Endothelial cell of umbilical vein (primary cell): ENCODE measurements at regions of chr6 and their contacts with region 1.

Region 1: GRCh38 chr6:117840541-117840983 is 66.5 kb upstream of the SLC35F1 start:
- DNase-seq: peak; percentile 41
- H3K4me3 ChIP-seq: no peak overlapping the region
- H3K27ac ChIP-seq: no peak overlapping the region
- H3K4me1 ChIP-seq: no peaks in the 10 kb centered on the region
- H3K27me3 ChIP-seq: no peaks in the 10 kb centered on the region
- CTCF ChIP-seq: peak; percentile 9 to 11
- POLR2A ChIP-seq: no peak

Region 2: DNA sequence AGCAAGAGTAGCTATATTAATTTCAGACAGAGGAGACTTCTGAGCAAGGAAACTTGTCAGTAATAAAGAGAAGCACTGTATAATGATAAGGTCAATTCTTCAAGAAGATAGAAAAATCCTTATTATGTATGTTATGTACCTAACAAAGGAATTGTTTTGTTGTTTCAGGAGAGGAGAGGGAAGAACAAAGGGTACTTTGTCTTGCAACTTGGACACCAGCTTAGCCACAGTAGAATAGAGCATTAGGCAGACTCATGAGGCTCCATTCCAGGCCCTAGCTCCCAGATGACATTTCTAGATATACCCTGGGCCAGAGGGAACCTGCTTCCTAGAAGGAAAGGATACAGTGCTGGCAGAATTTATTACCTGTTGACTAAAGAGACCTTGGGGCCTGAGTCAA is 171.8 kb before region 1 on chr6:
- CTCF ChIA-PET with region 1: no interaction called
- POLR2A ChIA-PET with region 1: no interaction called
- dilution Hi-C with region 1: no loop called
- intact Hi-C with region 1: no loop called
- DNase-seq: no peak
- H3K4me3 ChIP-seq: no peak overlapping the region
- H3K27ac ChIP-seq: no peak overlapping the region
- H3K4me1 ChIP-seq: no peaks in the 10 kb centered on the region
- H3K27me3 ChIP-seq: no peaks in the 10 kb centered on the region
- CTCF ChIP-seq: no peak
- POLR2A ChIP-seq: no peak

Region 3: DNA sequence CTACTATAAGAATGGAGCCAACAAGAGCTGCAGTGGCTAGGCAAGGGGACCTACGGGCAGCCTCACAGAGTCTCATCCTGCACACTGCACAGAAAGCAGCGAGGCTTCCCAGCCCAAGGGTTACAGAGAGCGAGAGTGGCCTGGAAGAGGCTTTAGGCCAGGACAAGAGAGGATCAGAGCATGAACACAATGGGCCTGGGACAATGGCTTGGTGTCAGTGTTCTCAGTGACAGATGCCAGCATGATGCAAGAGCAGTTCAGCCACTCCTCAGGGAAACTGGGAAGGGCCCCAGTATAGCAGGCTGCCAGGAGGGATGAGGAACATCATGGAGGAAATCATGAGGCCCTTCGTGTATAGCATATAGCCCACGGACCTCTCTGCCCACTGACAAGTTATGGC is 57.3 kb before region 1 on chr6:
- CTCF ChIA-PET with region 1: no interaction called
- POLR2A ChIA-PET with region 1: no interaction called
- dilution Hi-C with region 1: no loop called
- intact Hi-C with region 1: no loop called
- DNase-seq: no peak
- H3K4me3 ChIP-seq: no peak overlapping the region
- H3K27ac ChIP-seq: no peak overlapping the region
- H3K4me1 ChIP-seq: no peaks in the 10 kb centered on the region
- H3K27me3 ChIP-seq: no peaks in the 10 kb centered on the region
- CTCF ChIP-seq: no peak
- POLR2A ChIP-seq: no peak

Region 4: GRCh38 chr6:118263921-118264486 is 423.4 kb after region 1 on chr6:
- CTCF ChIA-PET with region 1: no interaction called
- POLR2A ChIA-PET with region 1: no interaction called
- dilution Hi-C with region 1: no loop called
- intact Hi-C with region 1: loop called (anchors 5 kb)
- DNase-seq: peak; percentile 12
- H3K4me3 ChIP-seq: no peak overlapping the region
- H3K27ac ChIP-seq: no peak overlapping the region
- H3K4me1 ChIP-seq: no peaks in the 10 kb centered on the region
- H3K27me3 ChIP-seq: no peaks in the 10 kb centered on the region
- CTCF ChIP-seq: no peak
- POLR2A ChIP-seq: no peak

Region 5: GRCh38 chr6:118580585-118581419 is 740.2 kb after region 1 on chr6:
- CTCF ChIA-PET with region 1: interaction called, 8 read pairs
- POLR2A ChIA-PET with region 1: no interaction called
- dilution Hi-C with region 1: no loop called
- intact Hi-C with region 1: loop called (anchors 2 kb)
- DNase-seq: peak; percentile 68
- H3K4me3 ChIP-seq: no peak overlapping the region
- H3K27ac ChIP-seq: no peak overlapping the region
- H3K4me1 ChIP-seq: no peaks in the 10 kb centered on the region
- H3K27me3 ChIP-seq: no peaks in the 10 kb centered on the region
- CTCF ChIP-seq: peak; percentile 54 to 56
- POLR2A ChIP-seq: no peak

Region 6: GRCh38 chr6:118776607-118777549 is 936.3 kb after region 1 on chr6:
- CTCF ChIA-PET with region 1: interaction called, 8 read pairs
- POLR2A ChIA-PET with region 1: no interaction called
- dilution Hi-C with region 1: no loop called
- intact Hi-C with region 1: loop called (anchors 2 kb)
- DNase-seq: peak; percentile 84
- H3K4me3 ChIP-seq: no peak overlapping the region
- H3K27ac ChIP-seq: no peak overlapping the region
- H3K4me1 ChIP-seq: no peaks in the 10 kb centered on the region
- H3K27me3 ChIP-seq: peaks cover 7% of the 10 kb centered on the region in 2 experiments
- CTCF ChIP-seq: peak; percentile 58 to 59
- POLR2A ChIP-seq: no peak

Region 7: DNA sequence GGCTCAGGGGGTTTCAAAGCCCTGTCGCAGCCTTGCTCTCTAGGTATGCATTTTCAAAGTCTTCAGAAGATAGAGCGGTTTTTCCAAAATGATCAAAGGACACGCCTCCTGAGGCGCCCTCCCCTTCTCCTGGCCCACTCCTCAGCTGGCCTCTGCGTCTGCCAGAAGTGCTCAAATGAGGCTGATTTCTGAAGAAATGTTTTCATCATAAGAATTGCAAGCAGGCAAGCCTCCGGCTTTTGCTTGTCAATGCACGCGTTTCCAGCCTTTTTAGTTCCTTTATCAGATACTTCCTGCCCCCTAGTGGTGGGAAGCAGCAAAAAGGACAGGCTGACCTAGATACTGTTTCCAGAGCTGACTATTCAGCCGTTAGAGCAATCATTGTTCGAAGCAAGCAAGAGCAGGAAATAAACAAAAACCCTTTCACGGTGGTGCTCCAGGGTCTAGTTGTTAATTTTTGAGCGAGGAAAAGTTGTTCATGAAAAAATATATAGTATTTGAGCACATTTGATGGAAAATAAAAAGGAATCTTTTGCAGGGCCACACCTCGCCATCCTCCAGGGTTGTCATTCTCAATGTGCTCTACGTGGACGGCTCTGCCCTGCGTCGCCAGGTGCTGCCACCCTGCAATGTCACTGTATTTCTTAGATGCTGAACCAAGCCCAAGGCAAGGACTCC is 960.0 kb after region 1 on chr6:
- CTCF ChIA-PET with region 1: interaction called, 13 read pairs
- POLR2A ChIA-PET with region 1: no interaction called
- dilution Hi-C with region 1: no loop called
- intact Hi-C with region 1: no loop called
- DNase-seq: peak; percentile 76
- H3K4me3 ChIP-seq: no peak overlapping the region
- H3K27ac ChIP-seq: no peak overlapping the region
- H3K4me1 ChIP-seq: no peaks in the 10 kb centered on the region
- H3K27me3 ChIP-seq: no peaks in the 10 kb centered on the region
- CTCF ChIP-seq: peak; percentile 83 to 86
- POLR2A ChIP-seq: no peak